Activated CD4-positive, alpha-beta memory T cell treated with anti-CD3 and anti-CD28 coated beads, Interleukin-2, amount 10 ng/mL, durations not matched to agents 7 days and 5 days (primary cell): ENCODE measurements at regions of chr5 and their contacts with region 1.

Region 1: DNA sequence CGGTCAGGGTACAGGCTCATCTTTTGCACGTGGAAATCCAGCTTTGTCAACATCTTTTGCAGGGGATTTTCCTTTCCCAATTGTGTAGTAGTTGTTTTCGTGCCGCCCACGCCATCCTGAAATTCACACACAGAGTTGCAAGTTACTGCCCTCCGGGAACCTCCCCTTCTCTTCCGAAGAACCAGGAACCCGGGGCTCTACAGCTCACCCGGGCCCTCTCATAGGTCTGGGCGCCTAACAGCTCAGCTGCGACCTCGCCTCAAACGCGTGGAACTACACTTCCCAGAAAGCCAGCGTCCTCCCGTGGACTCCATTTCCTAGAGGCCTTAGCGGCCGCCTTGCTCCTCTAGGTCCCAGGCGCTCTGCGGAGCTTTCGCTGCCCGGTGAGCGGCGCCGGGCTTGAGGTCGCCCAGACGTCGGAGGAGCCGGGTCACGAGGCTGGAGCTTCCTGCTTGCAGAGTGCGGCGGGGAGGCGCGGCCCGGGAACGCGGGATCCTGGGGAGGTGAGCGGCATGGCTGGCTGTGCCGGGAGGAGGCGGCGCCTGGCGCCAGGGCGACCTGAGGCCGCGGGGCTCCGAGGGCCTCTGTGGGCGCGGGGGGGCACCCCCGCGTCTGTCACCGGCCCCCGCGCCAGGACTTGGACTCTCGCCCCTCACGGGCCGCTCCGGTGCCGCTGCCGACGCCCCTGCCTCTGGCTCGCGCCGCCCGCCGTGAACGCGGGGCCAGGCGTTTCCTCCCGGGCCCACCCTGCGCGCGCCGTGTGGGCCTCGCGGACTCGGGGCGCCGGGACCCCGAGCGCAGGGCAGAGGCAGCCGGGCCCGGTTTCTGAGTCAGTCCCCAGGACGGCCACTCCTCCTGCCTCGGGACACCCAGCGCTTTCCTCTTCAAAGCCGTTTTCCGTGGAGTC is at the start of gene ZNF354B:
- DNase-seq: peak; percentile 85
- H3K4me3 Mint-ChIP-seq: peak within 1 kb of the TSS; percentile 82
- H3K27ac Mint-ChIP-seq: peak within 1 kb of the TSS; percentile 63
- H3K4me1 Mint-ChIP-seq: peaks cover 22% of the 10 kb centered on the region
- H3K27me3 Mint-ChIP-seq: no peaks in the 10 kb centered on the region
- total RNA-seq, gene ZNF354B: 9.5 to 10.6 TPM

Region 2: GRCh38 chr5:178732281-178732680 is 127.6 kb before region 1 on chr5:
- CTCF ChIA-PET with region 1: interaction called, 18 read pairs
- POLR2A ChIA-PET with region 1: interaction called, 6 read pairs
- DNase-seq: no peak
- H3K4me3 Mint-ChIP-seq: no peak overlapping the region
- H3K27ac Mint-ChIP-seq: no peak overlapping the region
- H3K4me1 Mint-ChIP-seq: peaks cover 9% of the 10 kb centered on the region
- H3K27me3 Mint-ChIP-seq: no peaks in the 10 kb centered on the region